ENCODE measurements at regions of chr2 and their contacts with region 1.

Region 1: GRCh38 chr2:84925724-84926376 is 20.4 kb downstream of the TMSB10 start:
- DNase-seq: peak; percentile 82 to 97 (median 92)
- H3K4me3 ChIP-seq: peak overlapping the region in 58 of 59 donors; percentile 27 to 74 (median 54)
- H3K27ac ChIP-seq: peak overlapping the region in 8 of 59 donors; percentile 5 to 78 (median 19)
- H3K27me3 ChIP-seq: no peaks in the 10 kb centered on the region
- CTCF ChIP-seq: peak; percentile 79 to 99 (median 95)

Region 2: DNA sequence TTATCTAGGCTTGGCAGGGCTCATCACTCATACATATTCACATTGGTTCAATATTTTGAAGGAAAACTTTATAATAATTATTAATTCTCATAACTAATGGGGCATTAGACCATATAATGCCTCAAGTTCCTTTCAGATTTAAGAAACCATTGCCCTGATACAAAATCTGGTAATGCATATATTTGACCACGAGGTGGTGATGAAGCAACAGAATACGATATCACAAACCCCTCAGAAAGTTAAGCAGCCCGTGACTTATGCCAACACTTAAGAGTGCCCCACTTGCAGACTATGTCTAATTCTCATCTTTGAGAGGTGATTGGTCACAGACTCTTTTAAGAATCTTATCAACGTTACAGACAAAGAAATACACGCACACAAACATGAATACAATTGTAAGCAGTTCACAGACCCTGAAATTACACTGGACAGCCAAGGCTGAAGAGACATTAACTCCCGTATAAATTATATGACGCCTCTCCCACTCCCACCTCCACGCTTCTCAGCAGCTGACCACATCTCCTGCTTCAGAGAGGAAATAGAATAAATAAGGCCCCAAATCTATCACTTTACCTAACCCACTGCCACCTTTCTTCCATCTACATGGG is 430.2 kb before region 1 on chr2:
- intact Hi-C with region 1: loop called in 1 of 2 experiments (anchors 2 kb)
- DNase-seq: no peak
- H3K4me3 ChIP-seq: no peak overlapping the region
- H3K27ac ChIP-seq: no peak overlapping the region
- H3K27me3 ChIP-seq: no peaks in the 10 kb centered on the region
- CTCF ChIP-seq: peak; percentile 63 to 93 (median 80)

Region 3: DNA sequence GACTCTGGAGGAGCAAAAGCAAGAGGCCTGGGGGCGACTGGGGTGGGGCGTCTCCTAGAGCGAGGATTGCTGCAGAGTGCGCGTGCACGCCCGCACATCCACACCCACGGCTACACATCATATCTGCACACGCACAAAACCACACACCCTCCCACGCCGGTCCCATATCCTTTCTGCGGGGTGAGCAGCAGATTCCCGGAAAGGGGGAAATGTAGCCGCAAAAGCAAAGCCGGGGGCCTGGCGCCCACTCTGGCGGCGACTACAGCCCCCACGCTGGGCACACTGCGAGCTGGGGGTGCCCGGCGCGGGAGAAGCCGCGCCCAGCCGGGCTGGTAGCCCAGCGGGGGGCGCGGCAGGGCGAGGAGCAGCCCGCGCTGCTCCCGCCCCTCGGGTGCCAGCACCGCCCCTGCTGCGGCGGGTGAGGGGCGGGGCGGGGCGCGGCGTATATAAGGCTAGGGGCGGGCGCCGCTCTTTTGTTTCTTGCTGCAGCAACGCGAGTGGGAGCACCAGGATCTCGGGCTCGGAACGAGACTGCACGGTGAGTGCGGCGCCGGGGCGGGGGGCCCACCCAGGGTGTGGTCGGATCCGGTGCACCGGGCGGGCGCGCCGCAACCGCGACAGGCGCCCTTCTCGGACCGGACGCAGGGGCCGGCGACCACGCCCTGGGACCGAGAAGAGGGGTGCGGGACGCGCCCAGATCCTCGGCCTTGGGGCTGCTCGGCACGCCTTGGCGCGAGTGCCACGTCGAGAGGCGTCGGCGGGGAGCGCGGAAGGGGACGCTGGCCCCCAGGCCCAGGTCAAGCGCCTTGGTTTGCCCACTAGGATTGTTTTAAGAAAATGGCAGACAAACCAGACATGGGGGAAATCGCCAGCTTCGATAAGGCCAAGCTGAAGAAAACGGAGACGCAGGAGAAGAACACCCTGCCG is 20.4 kb before region 1 on chr2 and contains the start of gene TMSB10:
- intact Hi-C with region 1: loop called in 1 of 2 experiments (anchors 2 kb)
- DNase-seq: peak; percentile 70 to 92 (median 82)
- H3K4me3 ChIP-seq: peak within 1 kb of the TSS; percentile 63 to 98 (median 91)
- H3K27ac ChIP-seq: peak within 1 kb of the TSS; percentile 39 to 96 (median 88)
- H3K27me3 ChIP-seq: no peaks in the 10 kb centered on the region
- CTCF ChIP-seq: peak in 33 of 56 donors; percentile 4 to 75 (median 33)
- total RNA-seq, gene TMSB10: 441 to 1,542 (median 928) TPM

Region 4: GRCh38 chr2:84970868-84971509 is 45.1 kb after region 1 on chr2 and contains the start of gene KCMF1:
- intact Hi-C with region 1: loop called in 1 of 2 experiments (anchors 5 kb)
- DNase-seq: peak; percentile 20 to 77 (median 52)
- H3K4me3 ChIP-seq: peak within 1 kb of the TSS; percentile 62 to 94 (median 86)
- H3K27ac ChIP-seq: peak within 1 kb of the TSS; percentile 62 to 97 (median 92)
- H3K27me3 ChIP-seq: no peaks in the 10 kb centered on the region
- CTCF ChIP-seq: no peak
- total RNA-seq, gene KCMF1: 43.1 to 97.7 (median 72.5) TPM

Region 5: GRCh38 chr2:85057226-85057962 is 131.5 kb after region 1 on chr2:
- intact Hi-C with region 1: loop called in 1 of 2 experiments (anchors 5 kb)
- DNase-seq: no peak
- H3K4me3 ChIP-seq: peak overlapping the region in 17 of 59 donors; percentile 0 to 36 (median 19)
- H3K27ac ChIP-seq: peak overlapping the region in 2 of 59 donors; percentile 27 to 46
- H3K27me3 ChIP-seq: no peaks in the 10 kb centered on the region
- CTCF ChIP-seq: no peak

Region 6: GRCh38 chr2:85243101-85244072 is 317.5 kb after region 1 on chr2:
- intact Hi-C with region 1: loop called in 1 of 2 experiments (anchors 5 kb)
- DNase-seq: peak in 9 of 10 donors; percentile 30 to 74 (median 58)
- H3K4me3 ChIP-seq: no peak overlapping the region
- H3K27ac ChIP-seq: peak overlapping the region in 1 of 59 donors; percentile 36
- H3K27me3 ChIP-seq: no peaks in the 10 kb centered on the region
- CTCF ChIP-seq: peak in 55 of 56 donors; percentile 48 to 86 (median 68)

Region 7: GRCh38 chr2:85288244-85288725 is 362.4 kb after region 1 on chr2:
- intact Hi-C with region 1: loop called in 1 of 2 experiments (anchors 5 kb)
- DNase-seq: no peak
- H3K4me3 ChIP-seq: no peak overlapping the region
- H3K27ac ChIP-seq: no peak overlapping the region
- H3K27me3 ChIP-seq: no peaks in the 10 kb centered on the region
- CTCF ChIP-seq: no peak

Region 8: GRCh38 chr2:85420536-85421259 is 494.8 kb after region 1 on chr2:
- intact Hi-C with region 1: no loop called
- DNase-seq: peak; percentile 86 to 94 (median 90)
- H3K4me3 ChIP-seq: peak overlapping the region in 53 of 59 donors; percentile 1 to 55 (median 26)
- H3K27ac ChIP-seq: peak overlapping the region; percentile 67 to 99 (median 97)
- H3K27me3 ChIP-seq: no peaks in the 10 kb centered on the region
- CTCF ChIP-seq: peak; percentile 99 to 100 (median 100)

Measured in dorsolateral prefrontal cortex (tissue), 120 donors.